ENCODE measurements at regions of chr15 and their contacts with region 1.

Region 1: GRCh38 chr15:75625542-75626347 is at the start of gene SNUPN:
- DNase-seq: peak; percentile 98
- total RNA-seq, gene SNUPN: 13.6 TPM

Region 2: GRCh38 chr15:75123395-75123794 is 502.4 kb before region 1 on chr15:
- intact Hi-C with region 1: no loop called
- DNase-seq: no peak

Region 3: DNA sequence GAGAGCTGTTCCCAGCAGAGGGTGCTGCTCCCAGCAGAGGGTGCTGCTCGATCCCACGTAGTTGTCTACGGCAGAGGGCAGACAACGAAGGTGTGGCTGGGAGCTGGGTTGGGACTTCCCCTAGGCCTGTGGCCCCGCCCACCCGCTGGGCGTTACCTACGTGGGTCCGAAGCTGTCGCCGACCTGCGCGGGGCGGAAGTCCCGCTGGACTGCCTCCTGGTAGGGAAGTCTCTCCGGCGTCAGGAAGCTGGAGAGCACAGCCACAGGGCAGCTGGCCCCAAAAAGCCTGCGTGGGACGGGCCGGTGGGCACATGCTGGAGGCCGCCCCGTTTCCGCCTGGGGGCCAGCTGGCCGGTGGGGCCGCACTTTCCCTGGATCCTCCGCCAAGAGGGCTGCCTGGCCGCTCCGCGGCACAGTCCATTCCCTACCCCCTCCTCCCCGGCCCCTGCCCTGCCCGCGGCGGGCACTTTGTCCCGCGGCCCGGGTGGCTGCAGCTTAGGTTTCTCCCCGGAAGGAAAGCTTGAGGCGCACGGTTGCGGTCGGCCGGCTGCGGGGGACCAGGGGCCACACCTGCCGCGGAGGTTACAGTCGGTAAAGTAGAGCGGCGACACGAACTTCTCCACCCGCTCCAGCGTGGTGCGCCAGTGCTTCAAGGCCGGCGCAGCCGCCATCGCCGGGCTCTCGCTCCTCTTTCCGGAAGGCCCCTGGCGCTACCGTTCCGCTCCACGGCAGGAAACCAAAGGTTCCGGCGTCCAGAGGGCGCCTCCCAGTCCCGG is 257.6 kb before region 1 on chr15 and contains the start of gene MAN2C1:
- intact Hi-C with region 1: loop called (anchors 1 kb)
- DNase-seq: peak; percentile 97
- total RNA-seq, gene MAN2C1: 153 TPM

Region 4: DNA sequence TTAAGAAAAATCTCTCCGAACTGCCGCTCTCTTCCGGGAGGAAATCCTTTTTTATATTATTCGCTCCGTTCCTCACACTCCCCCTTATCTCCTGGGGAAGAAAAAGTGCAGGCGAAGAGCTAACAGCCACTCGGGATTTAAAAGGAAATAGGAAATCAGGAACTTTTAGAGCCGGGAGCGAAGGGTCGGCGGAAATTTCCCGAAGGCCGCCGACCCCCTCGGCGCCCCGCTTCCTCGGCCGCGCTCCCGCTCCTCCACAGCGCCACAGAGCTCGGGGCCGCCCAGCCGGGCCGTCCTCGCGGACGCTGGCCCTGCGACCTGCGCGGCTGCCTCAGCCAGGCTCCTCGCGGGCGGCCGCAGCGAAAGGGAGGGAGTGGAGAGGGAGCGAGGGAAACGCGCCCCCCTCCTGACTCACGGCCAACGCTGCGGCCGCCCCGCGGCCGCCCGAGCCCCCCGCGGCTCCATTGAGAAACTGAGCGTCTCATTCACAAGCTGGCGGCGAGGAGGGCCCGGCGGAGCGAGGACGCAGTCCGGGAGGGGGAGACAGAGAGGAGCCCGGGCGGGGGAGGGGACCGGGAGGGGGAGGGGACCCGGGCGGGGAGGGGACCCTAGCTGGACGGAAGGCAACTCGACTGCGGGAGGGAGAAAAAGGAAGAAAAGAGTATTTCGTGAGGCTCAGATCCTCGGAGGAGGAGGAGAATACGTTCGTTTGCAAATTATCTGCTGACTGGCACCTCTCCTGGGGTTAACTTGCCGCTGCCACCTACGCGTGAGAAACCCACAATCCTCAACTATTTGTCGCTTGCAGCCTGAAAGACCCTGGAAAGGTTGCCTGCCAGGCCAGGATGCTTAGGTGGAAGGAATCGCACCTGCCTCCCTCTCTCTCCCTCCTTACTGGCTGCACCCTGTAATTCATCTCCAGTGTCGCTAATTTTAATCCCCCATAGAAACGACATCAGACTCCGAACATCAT is 46.5 kb before region 1 on chr15 and contains the start of gene PTPN9:
- intact Hi-C with region 1: loop called (anchors 5 kb)
- DNase-seq: peak; percentile 90
- total RNA-seq, gene PTPN9: 8.8 TPM

Region 5: GRCh38 chr15:75639709-75640482 is 14.2 kb after region 1 on chr15 and contains the start of gene IMP3:
- intact Hi-C with region 1: loop called (anchors 1 kb)
- DNase-seq: peak; percentile 97
- total RNA-seq, gene IMP3: 30.0 TPM

Measured in cardiac septum (tissue), 1 donor.